ENCODE measurements at regions of chr7 and their contacts with region 1.

Region 1: DNA sequence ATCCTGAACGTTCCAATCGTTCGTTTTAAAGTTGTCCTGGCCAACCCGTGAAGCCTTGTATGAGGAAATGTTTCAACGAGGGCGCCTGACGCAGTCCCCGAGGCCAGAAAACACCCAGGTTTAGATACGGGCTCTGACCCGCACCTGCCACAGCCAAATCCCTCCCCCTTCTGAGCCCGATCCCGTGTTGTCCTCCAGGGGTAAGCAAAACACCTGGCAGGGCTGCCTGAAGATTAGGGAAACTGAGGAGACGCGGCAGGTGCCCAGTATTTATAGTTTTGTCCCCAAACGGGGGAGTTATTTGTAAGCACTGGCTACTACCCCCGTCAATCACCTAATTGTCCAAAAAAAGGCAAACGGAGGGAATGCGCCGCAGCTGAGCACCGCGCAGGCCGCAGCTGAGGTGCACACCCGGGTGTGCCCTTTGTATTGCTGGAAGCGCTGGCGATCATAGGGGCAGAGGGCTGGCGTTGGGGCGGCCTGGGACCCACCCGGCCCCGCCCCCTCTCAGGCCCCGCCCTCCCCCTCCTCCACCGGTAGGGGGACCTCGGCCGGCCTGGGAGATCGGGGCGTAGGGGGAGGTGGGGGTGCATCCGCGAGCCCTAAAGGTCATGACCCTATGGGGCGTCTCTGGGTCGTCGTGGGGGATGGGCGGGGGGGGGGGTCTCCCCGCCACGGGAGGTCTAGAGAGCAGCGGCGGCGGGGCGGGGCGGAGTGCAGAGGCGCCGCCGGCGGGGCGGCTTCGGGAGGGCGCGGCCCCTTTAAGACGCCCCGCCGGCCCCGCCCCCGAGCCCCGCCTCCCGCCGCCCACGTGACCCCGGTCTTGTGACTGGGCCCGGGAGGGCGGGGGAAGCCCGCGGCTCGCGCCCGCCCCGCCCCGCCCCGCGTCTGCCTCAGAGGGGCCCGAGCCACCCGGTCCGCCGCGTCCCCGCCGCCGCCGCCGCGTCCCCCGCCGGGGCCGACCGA is at the start of gene BRI3:
- DNase-seq: peak; percentile 86
- ATAC-seq: peak; percentile 82
- H3K4me3 Mint-ChIP-seq: peak within 1 kb of the TSS; percentile 86
- H3K27ac Mint-ChIP-seq: peak within 1 kb of the TSS; percentile 75
- H3K4me1 Mint-ChIP-seq: peaks cover 36% of the 10 kb centered on the region
- H3K27me3 Mint-ChIP-seq: no peaks in the 10 kb centered on the region
- CTCF ChIP-seq: no peak
- total RNA-seq, gene BRI3: 53.7 and 55.9 TPM in 2 replicates

Region 2: GRCh38 chr7:97418312-97418711 is 862.8 kb before region 1 on chr7:
- CTCF ChIA-PET with region 1: no interaction called
- POLR2A ChIA-PET with region 1: no interaction called
- intact Hi-C with region 1: no loop called
- DNase-seq: no peak
- ATAC-seq: no peak
- H3K4me3 Mint-ChIP-seq: no peak overlapping the region
- H3K27ac Mint-ChIP-seq: no peak overlapping the region
- H3K4me1 Mint-ChIP-seq: no peaks in the 10 kb centered on the region
- H3K27me3 Mint-ChIP-seq: no peaks in the 10 kb centered on the region
- CTCF ChIP-seq: no peak

Region 3: DNA sequence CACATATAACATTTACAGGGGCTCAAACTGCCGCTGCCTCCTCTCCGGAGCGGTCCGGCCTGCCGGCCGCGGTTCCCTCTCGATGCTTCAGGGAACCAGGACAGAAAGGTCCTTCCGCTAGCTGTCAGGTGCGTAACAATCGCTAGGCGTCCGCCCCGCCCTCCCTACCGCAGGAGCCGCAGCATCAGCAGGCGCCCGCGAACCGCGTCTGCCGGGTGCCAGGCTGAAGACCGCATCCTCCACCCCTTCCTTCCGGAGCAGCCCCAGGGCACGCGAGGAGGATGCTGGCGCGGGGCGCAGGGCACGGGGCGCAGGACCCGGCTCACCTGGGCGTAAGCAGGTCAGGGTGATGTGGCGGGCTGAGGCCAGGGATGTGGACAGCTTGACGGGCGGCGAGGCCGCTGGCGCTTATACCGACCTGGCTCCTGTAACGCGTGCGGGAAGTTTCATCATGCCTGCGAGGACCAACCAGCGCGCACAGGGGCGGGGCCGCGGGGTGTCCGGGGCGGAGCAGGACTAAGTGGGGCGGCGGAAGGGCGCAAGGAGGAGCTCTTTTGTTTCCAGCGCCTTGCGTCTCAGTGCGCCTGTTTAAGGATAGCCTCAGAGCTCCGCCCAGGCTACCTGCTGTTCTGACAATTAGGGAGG is 408.9 kb before region 1 on chr7 and contains the start of gene ASNS:
- CTCF ChIA-PET with region 1: no interaction called
- POLR2A ChIA-PET with region 1: no interaction called
- intact Hi-C with region 1: loop called (anchors 1 kb)
- DNase-seq: peak; percentile 86
- ATAC-seq: peak; percentile 92
- H3K4me3 Mint-ChIP-seq: peak within 1 kb of the TSS; percentile 89
- H3K27ac Mint-ChIP-seq: peak within 1 kb of the TSS; percentile 90
- H3K4me1 Mint-ChIP-seq: peaks cover 13% of the 10 kb centered on the region
- H3K27me3 Mint-ChIP-seq: no peaks in the 10 kb centered on the region
- CTCF ChIP-seq: no peak
- total RNA-seq, gene ASNS: 92.1 and 101 TPM in 2 replicates

Region 4: DNA sequence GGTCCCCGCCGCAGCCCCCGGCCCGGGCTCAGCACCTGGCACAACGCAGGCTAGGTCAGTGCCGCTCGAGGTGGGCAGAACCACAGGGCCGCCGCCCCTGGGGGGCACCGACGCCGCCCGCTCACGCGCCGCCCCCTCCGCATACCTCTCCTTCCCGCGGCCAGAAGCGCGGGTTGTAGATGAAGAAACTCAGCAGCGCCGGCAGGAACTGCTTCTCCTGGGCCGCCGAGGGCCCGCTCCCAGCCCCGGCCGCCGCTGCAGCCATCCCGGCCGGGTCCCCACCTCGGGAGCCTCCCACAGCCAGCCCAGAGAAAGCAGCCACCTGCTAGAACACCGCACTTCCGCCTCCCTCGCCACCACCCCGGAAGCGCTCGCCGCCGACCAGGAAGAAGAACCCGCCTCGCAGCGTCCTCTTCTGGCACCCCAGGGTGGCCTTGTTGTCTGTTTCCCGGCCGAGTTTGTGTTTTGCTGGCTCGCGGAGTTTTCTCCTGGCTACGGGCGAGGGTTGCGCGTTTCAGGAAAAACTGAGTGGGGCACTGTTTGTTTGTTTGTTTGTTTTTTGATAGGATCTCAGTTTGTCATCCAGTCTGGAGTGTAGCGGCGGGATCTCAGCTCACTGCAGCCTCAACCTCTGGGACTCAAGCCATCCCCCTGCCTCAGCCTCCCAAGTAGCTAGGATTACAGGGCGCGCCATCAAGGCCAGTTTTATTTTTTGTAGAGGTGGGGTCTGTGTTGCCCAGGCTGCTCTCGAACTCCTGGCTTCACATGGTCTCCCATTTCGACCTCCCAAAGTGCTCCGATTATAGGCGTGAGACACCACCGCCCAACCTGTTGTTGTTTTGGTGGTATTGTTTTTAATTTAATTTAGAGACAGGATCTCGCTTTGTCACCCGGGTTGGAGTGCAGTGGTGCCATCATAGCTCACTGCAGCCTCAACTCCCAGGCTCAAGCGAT is 308.8 kb before region 1 on chr7:
- CTCF ChIA-PET with region 1: no interaction called
- POLR2A ChIA-PET with region 1: no interaction called
- intact Hi-C with region 1: loop called (anchors 1 kb)
- DNase-seq: peak; percentile 75
- ATAC-seq: peak; percentile 92
- H3K4me3 Mint-ChIP-seq: peak overlapping the region; percentile 92
- H3K27ac Mint-ChIP-seq: peak overlapping the region; percentile 91
- H3K4me1 Mint-ChIP-seq: peaks cover 22% of the 10 kb centered on the region
- H3K27me3 Mint-ChIP-seq: peaks cover 2% of the 10 kb centered on the region
- CTCF ChIP-seq: no peak

Region 5: DNA sequence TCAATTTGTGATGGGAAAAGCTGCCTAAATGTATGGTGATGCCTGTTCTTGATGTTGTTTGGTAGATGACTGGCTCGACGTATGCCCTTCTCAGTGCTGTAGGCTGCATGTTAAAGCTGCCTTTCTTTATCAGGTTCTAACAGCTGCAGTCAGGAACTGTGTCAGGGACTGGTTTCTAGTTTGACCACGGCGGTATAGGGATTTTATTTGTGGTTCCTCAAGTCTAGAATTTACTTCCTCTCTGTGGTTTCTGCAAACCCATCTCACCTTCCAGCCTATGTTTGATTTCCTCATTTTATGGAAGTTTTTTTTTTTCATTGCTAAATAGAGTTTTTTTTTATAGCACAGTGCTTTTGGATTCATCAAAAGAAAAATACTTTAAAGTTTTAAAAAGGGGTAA is 147.9 kb before region 1 on chr7:
- CTCF ChIA-PET with region 1: no interaction called
- POLR2A ChIA-PET with region 1: no interaction called
- intact Hi-C with region 1: no loop called
- DNase-seq: no peak
- ATAC-seq: peak; percentile 70
- H3K4me3 Mint-ChIP-seq: peak overlapping the region; percentile 50
- H3K27ac Mint-ChIP-seq: no peak overlapping the region
- H3K4me1 Mint-ChIP-seq: peaks cover 72% of the 10 kb centered on the region
- H3K27me3 Mint-ChIP-seq: peaks cover 49% of the 10 kb centered on the region
- CTCF ChIP-seq: no peak

Region 6: DNA sequence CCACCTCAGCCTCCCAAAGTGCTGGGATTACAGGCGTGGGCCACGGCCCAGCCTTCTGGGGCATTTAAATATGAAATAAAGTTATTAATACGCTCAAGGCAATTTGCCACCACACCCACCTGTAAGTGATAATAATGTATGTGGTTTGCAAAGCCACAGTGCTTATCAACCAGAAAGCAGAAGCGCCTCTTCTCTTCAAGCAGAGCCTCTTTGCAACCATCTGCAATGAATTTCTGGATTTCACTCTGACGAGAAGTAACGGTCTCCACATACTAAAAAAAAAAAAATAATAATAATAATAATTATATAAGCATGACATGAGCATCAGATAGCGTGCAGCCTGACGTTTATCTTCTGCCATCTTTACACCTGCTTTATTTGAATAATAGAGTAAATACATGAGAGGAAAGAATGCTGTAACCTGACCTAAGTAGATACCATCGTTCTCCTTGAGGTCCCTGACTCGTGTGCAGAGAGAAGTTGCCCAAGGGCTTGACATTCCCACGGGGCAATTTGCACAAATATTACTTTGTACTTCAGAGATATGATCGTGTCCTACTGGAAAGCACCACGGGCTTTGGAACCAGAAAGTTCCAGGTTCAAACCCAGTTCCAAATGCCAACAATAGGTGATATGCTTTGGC is 34.4 kb after region 1 on chr7:
- CTCF ChIA-PET with region 1: no interaction called
- POLR2A ChIA-PET with region 1: interaction called, 6 read pairs
- intact Hi-C with region 1: loop called (anchors 1 kb)
- DNase-seq: no peak
- ATAC-seq: peak; percentile 61
- H3K4me3 Mint-ChIP-seq: peak overlapping the region; percentile 15
- H3K27ac Mint-ChIP-seq: peak overlapping the region; percentile 76
- H3K4me1 Mint-ChIP-seq: peaks cover 41% of the 10 kb centered on the region
- H3K27me3 Mint-ChIP-seq: peaks cover 28% of the 10 kb centered on the region
- CTCF ChIP-seq: no peak

Region 7: DNA sequence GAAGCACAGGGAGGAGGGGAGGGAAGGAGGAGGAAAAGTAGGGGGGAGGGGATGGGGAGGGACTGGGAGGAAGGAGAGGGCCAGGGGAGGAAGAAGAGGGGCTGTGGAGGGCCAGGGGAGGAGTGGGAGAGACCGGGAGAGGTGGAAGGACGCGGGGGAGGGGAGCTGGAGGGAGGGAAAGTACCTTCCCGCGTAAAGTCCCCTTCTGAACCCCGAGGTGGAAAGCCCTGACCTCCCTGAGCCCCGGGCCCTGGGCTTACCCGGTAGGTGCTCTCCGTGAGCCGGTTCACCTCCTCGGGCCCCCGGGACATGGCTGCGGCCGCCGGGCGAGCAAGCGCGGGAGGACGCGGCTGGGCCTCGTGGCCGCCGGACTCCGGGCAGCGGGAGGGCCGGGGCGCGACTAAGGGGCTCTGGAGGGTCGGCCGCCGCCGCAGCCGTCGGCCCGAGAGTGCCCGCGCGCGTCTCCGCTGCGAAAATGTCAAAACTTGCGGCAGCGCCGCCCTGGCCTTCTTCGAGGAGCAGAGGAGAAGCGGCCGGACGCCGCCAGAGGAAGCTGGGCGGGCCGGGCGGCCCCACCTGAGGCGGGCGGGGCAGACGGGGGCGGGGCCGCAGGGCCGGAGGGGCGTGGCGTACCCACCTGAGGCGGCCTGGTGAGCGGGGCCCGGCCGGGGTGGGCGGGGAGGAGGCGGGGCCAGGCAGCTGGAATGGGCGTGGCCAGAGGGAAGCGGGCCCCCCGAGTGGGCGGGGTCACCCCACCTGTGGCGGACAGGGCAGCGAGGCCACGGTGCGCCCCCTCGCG is 119.7 kb after region 1 on chr7 and contains the start of gene BAIAP2L1:
- CTCF ChIA-PET with region 1: interaction called, 3 read pairs
- POLR2A ChIA-PET with region 1: interaction called, 5 read pairs
- intact Hi-C with region 1: loop called (anchors 1 kb)
- DNase-seq: peak; percentile 87
- ATAC-seq: peak; percentile 92
- H3K4me3 Mint-ChIP-seq: peak within 1 kb of the TSS; percentile 76
- H3K27ac Mint-ChIP-seq: peak within 1 kb of the TSS; percentile 35
- H3K4me1 Mint-ChIP-seq: peaks cover 27% of the 10 kb centered on the region
- H3K27me3 Mint-ChIP-seq: peaks cover 26% of the 10 kb centered on the region
- CTCF ChIP-seq: no peak
- total RNA-seq, gene BAIAP2L1: 8.1 and 10.4 TPM in 2 replicates

Region 8: GRCh38 chr7:98870121-98870651 is 589.1 kb after region 1 on chr7:
- CTCF ChIA-PET with region 1: no interaction called
- POLR2A ChIA-PET with region 1: no interaction called
- intact Hi-C with region 1: loop called (anchors 2 kb)
- DNase-seq: peak; percentile 85
- ATAC-seq: peak; percentile 98
- H3K4me3 Mint-ChIP-seq: peak overlapping the region; percentile 85
- H3K27ac Mint-ChIP-seq: peak overlapping the region; percentile 63
- H3K4me1 Mint-ChIP-seq: peaks cover 20% of the 10 kb centered on the region
- H3K27me3 Mint-ChIP-seq: peaks cover 5% of the 10 kb centered on the region
- CTCF ChIP-seq: no peak

Region 9: DNA sequence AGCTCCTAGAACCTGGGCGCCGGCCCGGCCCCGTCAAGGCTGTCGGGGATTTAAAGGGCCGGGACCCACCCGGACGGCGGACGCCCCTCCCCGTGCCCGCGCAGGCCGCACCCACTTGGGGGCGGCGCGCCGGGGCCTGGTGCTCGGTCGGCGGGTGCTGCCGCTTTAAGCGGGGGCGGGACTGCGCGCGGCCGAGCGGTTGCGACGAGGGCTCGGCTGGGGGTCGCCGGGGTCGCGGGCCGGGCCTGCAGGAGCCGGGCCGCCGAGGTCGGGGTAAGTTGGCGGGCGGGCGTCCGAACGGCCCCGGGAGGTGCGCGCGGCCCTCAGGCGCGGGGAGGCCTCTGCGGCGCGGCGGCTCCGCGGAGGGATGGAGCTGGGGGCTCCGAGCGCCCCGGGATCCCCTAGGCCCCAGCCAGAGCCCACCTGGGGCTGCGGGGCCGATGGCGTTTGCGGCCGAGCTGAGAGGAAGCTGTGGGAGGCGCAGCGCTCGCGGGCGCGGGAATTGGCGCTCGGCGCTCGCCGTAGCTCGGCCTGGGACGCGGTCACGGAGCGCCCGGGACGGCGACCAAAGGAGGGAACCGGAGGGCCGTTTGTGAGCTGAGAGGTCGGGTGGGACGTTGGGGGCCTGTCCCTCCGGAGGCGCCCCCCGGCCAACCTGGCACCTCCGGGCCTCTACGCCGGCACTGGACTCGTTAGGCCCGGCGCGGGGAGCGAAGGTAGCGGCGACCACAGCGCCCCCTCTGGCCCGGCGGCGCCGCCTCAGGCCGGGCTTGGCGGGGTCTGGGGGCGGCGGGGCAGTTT is 597.5 kb after region 1 on chr7 and contains the start of gene TRRAP:
- CTCF ChIA-PET with region 1: interaction called, 4 read pairs
- POLR2A ChIA-PET with region 1: interaction called, 5 read pairs
- intact Hi-C with region 1: loop called (anchors 2 kb)
- DNase-seq: peak; percentile 80
- ATAC-seq: peak; percentile 81
- H3K4me3 Mint-ChIP-seq: peak within 1 kb of the TSS; percentile 91
- H3K27ac Mint-ChIP-seq: peak within 1 kb of the TSS; percentile 93
- H3K4me1 Mint-ChIP-seq: peaks cover 19% of the 10 kb centered on the region
- H3K27me3 Mint-ChIP-seq: peaks cover 3% of the 10 kb centered on the region
- CTCF ChIP-seq: peak; percentile 82
- total RNA-seq, gene TRRAP: 73.9 and 77.9 TPM in 2 replicates